Lower leg skin (tissue), 4 donors: ENCODE measurements at regions of chr12 and their contacts with region 1.

Region 1: DNA sequence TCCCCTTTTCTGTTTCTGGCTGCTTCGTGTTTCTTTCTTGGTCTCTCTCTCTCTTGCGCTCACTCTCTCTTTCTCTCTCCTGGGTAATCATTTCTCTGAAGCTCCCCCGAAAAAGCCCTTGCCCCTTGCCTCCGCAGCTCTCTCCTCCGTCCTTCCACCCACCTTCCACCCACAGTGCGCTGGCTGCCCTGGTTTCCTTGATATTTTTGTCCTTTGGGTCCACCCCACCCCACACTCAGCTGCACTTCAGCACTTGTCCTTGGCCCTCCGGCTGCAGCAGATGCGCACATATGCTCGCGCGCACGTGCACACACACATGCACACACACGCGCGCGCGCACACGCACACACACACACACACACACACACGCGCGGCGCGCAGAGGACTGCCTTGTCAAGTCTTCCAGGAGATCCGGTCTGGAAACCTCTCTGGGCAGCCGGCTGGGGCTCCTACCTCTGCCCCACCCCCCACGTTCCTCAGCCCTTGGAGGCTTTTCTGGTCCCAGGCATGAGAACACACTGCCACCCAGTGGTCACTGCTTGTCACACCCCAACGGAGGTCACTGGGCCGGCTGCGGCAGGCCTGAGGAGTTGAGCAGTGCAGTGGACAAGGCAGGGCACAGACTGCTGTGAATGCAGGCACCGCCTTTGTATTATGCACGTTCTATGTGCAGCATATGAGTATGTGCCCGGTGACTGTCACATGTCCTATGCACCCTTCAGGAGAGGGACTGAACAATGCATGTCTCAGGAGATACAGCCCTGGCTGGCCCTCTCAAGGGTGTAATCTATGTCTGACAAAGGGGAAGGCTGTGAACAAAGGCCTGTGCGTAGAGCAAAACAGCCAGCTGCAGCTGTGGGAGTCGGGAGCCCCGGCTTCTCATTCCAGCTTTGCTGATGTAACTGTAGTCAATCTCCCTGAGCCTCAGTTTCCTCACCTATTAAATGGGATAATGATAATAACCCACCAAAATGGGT is 6.5 kb downstream of the LAG3 start:
- DNase-seq: peak; percentile 94 to 99
- H3K4me3 ChIP-seq: no peak overlapping the region
- CTCF ChIP-seq: peak in 1 of 3 donors; percentile 88
- POLR2A ChIP-seq: no peak

Region 2: GRCh38 chr12:6753772-6754356 is 25.0 kb before region 1 on chr12:
- intact Hi-C with region 1: loop called (anchors 2 kb)
- DNase-seq: no peak
- H3K4me3 ChIP-seq: no peak overlapping the region
- CTCF ChIP-seq: no peak
- POLR2A ChIP-seq: no peak